ENCODE measurements at regions of chr10 and their contacts with region 1.

Region 1: GRCh38 chr10:56012095-56012494 is 349.0 kb downstream of the ZWINT start:
- DNase-seq: no peak
- ATAC-seq: no peak
- H3K4me3 ChIP-seq: no peak overlapping the region
- H3K27ac ChIP-seq: no peak overlapping the region
- H3K4me1 ChIP-seq: no peaks in the 10 kb centered on the region
- H3K27me3 ChIP-seq: no peaks in the 10 kb centered on the region
- CTCF ChIP-seq: no peak

Region 2: GRCh38 chr10:56973766-56974165 is 961.7 kb after region 1 on chr10:
- CTCF ChIA-PET with region 1: no interaction called
- POLR2A ChIA-PET with region 1: interaction called, 40 read pairs
- intact Hi-C with region 1: no loop called
- DNase-seq: no peak
- ATAC-seq: no peak
- H3K4me3 ChIP-seq: no peak overlapping the region
- H3K27ac ChIP-seq: no peak overlapping the region
- H3K4me1 ChIP-seq: no peaks in the 10 kb centered on the region
- H3K27me3 ChIP-seq: no peaks in the 10 kb centered on the region
- CTCF ChIP-seq: no peak

Region 3: GRCh38 chr10:57562211-57562610 is 1550.1 kb after region 1 on chr10:
- CTCF ChIA-PET with region 1: no interaction called
- POLR2A ChIA-PET with region 1: no interaction called
- intact Hi-C with region 1: no loop called
- DNase-seq: no peak
- ATAC-seq: no peak
- H3K4me3 ChIP-seq: no peak overlapping the region
- H3K27ac ChIP-seq: no peak overlapping the region
- H3K4me1 ChIP-seq: no peaks in the 10 kb centered on the region
- H3K27me3 ChIP-seq: no peaks in the 10 kb centered on the region
- CTCF ChIP-seq: no peak